GM23248 (cell line): ENCODE measurements at regions of chr1 and their contacts with region 1.

Region 1: DNA sequence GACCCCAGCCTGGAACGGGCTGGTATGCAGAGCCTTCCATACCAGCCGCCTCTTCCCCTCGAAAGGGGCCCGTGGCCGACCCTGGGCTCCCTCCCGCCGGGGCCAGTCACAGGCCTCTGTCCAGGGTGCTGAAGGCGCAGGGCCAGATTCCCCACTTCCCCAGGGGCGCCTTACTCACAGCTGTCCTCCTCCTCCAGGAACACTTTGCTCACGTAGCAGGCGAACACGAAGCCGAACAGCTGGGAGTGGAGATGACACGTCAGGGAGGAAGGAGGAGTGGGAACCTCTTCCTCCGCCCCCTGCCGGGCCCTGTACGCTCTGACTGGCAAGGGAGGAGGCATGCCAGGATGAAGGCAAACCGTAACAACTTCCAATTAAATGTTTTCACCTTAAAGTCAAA is 57.3 kb downstream of the NKAIN1 start:
- DNase-seq: peak; percentile 97
- H3K4me3 ChIP-seq: peak overlapping the region; percentile 28; the same call in 1 of the 2 replicates
- H3K27ac ChIP-seq: no peak overlapping the region
- H3K4me1 ChIP-seq: no peaks in the 10 kb centered on the region
- H3K27me3 ChIP-seq: peaks cover 4% of the 10 kb centered on the region; the same call in 1 of the 2 replicates

Region 2: GRCh38 chr1:31548907-31549808 is 366.8 kb after region 1 on chr1:
- in situ Hi-C with region 1: loop called (anchors 25 kb)
- DNase-seq: peak; percentile 85
- H3K4me3 ChIP-seq: peak overlapping the region; percentile 66
- H3K27ac ChIP-seq: peak overlapping the region; percentile 6
- H3K4me1 ChIP-seq: peaks cover 13% of the 10 kb centered on the region
- H3K27me3 ChIP-seq: no peaks in the 10 kb centered on the region